Ovary (tissue), 10 donors: ENCODE measurements at regions of chr20 and their contacts with region 1.

Region 1: GRCh38 chr20:32189691-32190615 is 17.6 kb downstream of the PLAGL2 start:
- DNase-seq: peak; percentile 42 to 65 (median 53)
- H3K4me3 ChIP-seq: peak overlapping the region; percentile 38
- H3K27ac ChIP-seq: peak overlapping the region; percentile 88 to 97
- H3K4me1 ChIP-seq: peaks cover 19% of the 10 kb centered on the region
- H3K27me3 ChIP-seq: no peaks in the 10 kb centered on the region
- CTCF ChIP-seq: no peak
- EP300 ChIP-seq: no peak
- POLR2A ChIP-seq: no peak

Region 2: DNA sequence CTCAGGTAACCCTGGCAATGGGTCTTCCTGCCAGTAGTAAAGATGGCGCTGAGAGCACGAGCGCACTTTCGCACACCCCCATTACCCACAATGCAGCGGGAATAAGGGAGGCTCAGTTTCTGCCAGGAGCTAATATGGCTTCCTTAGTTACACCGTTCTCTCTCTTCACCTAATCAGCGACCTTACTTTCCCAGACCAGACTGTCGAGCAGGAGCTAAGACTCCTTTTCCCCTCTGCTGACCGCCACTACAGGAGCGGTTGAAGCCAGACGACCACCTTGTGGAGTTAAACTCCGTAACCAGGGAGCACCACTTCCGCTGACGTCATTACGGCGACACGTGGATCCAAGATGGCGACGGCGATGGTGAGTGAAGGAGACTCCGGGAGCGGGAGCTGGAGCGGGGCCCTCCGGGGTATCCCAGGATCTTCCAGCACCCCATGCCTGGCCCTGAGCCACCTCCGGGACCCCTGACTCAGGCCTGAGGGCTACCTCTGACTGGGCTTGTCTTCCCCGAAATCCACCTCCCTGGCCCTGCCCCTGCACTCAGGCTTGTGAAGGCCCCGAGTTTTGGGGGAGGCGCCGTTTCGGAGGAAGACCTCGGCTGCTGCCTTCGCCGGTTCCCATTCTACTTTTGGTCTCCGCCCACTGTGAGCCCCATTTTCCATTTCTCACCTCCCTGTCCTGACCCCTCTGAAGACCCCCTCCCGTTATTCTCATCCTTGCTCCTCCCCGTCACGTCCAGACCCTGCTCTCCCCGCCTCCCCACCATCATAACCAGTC is 80.4 kb before region 1 on chr20 and contains the start of gene TM9SF4:
- intact Hi-C with region 1: loop called in 1 of 4 experiments (anchors 10 kb)
- DNase-seq: peak; percentile 89 to 93 (median 92)
- H3K4me3 ChIP-seq: peak within 1 kb of the TSS; percentile 77
- H3K27ac ChIP-seq: peak within 1 kb of the TSS; percentile 93 to 98
- H3K4me1 ChIP-seq: peaks cover 8% of the 10 kb centered on the region
- H3K27me3 ChIP-seq: no peaks in the 10 kb centered on the region
- CTCF ChIP-seq: no peak
- EP300 ChIP-seq: peak; percentile 21
- POLR2A ChIP-seq: peak; percentile 62
- total RNA-seq, gene TM9SF4: 16.2 to 51.0 (median 37.2) TPM

Region 3: DNA sequence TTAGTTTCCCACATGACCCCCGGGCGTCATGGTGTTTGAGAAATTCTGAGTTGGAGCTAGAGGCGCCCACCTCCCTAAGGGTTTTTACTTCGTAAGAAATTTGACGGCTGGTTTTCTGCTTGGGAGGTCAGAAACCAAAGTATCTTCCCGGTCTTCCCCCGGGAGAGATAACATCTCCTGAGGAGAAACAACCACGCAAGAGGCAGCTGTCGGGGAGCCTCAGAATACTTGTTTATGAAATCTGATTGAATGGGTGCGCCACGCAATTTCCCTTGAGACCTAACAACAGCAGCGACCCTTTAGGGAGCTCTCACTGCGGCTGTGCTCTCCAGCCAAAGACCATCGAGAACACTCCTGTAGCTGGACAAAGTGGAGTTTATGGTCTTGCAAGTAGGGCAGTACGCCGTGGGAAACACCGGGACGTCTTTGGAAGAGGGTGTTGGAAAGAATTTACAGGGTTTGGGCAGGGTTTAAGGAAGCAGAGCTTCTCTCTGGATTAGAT is 1922.7 kb after region 1 on chr20:
- intact Hi-C with region 1: no loop called
- DNase-seq: peak; percentile 13 to 51 (median 35)
- H3K4me3 ChIP-seq: peak overlapping the region; percentile 79
- H3K27ac ChIP-seq: peak overlapping the region; percentile 9 to 71
- H3K4me1 ChIP-seq: peaks cover 11% of the 10 kb centered on the region
- H3K27me3 ChIP-seq: no peaks in the 10 kb centered on the region
- CTCF ChIP-seq: no peak
- EP300 ChIP-seq: no peak
- POLR2A ChIP-seq: no peak